ENCODE measurements at regions of chr6 and their contacts with region 1.

Region 1: DNA sequence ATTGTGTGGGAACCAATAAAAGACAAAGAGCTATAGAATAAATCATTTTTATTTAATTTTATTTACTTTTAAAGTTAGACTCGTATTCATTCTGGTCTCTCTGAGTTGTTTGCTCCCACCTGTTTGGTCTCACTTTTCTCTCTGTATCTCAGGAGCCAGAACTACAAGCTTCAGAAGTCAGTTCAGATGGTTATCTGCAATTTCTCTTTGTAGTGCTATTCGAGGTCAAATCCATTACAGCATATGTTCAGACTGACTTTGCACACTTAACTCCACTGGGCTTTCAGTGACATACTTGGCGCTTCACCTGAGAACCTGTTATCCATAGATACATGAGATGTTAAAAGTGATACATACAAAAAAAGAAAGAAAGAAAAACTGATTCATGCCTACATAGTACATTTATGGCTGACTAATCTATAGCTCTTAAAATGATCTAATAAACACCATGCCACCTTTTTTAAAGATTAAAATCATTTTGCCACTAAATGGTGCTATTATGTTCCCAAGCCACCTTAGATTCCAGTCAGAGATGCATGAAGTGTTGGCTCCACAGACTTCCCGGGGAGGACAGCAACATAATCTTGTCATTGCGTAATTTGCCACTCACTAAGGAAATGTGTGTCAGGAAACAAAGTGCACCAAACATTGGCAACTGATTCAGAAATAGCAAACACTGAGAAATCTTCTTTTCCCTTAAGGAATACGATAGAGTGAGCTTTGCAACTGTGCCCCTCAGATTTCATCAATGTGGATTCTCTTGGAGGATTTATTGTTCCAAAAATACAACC is 396.7 kb downstream of the HACE1 start:
- DNase-seq: no peak

Region 2: GRCh38 chr6:104227508-104227907 is 235.5 kb before region 1 on chr6:
- in situ Hi-C with region 1: loop called (anchors 5 kb)
- DNase-seq: no peak

Region 3: DNA sequence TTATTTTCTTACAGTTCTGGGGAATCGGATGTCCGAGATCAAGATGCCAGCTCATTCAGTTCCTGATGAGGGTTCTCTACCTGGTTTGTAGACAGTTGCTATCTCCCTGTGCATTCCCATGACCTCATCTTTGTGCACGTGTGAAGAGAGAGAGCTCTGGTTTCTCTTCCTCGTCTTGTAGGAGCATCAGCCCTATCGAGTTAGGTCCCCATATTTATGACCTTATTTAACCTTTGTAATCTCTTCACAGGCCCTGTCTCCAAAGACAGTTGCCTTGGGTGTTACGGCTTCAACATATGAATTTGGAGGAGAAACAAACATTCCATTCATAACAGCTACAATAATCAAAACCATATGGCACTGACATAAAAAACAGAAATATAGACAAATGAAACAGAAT is 58.6 kb before region 1 on chr6:
- in situ Hi-C with region 1: no loop called
- DNase-seq: no peak